Aorta (tissue), 5 donors: ENCODE measurements at regions of chr4 and their contacts with region 1.

Region 1: GRCh38 chr4:16082426-16083240 is 1.2 kb downstream of the PROM1 start:
- DNase-seq: peak; percentile 62 to 81
- ATAC-seq: peak; percentile 70
- H3K4me3 ChIP-seq: peak overlapping the region; percentile 15 to 50
- H3K27ac ChIP-seq: no peak overlapping the region
- H3K4me1 ChIP-seq: no peaks in the 10 kb centered on the region
- H3K27me3 ChIP-seq: peaks cover 0 to 1% of the 10 kb centered on the region in 2 donors

Region 2: GRCh38 chr4:16019649-16020048 is 63.0 kb before region 1 on chr4:
- intact Hi-C with region 1: no loop called
- DNase-seq: no peak
- ATAC-seq: no peak
- H3K4me3 ChIP-seq: no peak overlapping the region
- H3K27ac ChIP-seq: peak overlapping the region in 1 of 2 donors; percentile 27
- H3K4me1 ChIP-seq: peaks cover 4% of the 10 kb centered on the region in 2 donors
- H3K27me3 ChIP-seq: no peaks in the 10 kb centered on the region

Region 3: GRCh38 chr4:16123356-16124084 is 40.9 kb after region 1 on chr4:
- intact Hi-C with region 1: loop called in 1 of 2 experiments (anchors 5 kb)
- DNase-seq: no peak
- ATAC-seq: no peak
- H3K4me3 ChIP-seq: no peak overlapping the region
- H3K27ac ChIP-seq: no peak overlapping the region
- H3K4me1 ChIP-seq: peaks cover 0 to 10% of the 10 kb centered on the region in 2 donors
- H3K27me3 ChIP-seq: no peaks in the 10 kb centered on the region